ENCODE measurements at regions of chr11 and their contacts with region 1.

Region 1: GRCh38 chr11:85854557-85855340 is 434 bp upstream of the CCDC83 start:
- DNase-seq: peak; percentile 76 to 96 (median 89)
- ATAC-seq: peak; percentile 97
- H3K4me3 ChIP-seq: peak overlapping the region; percentile 70
- H3K4me3 Mint-ChIP-seq: peak overlapping the region; percentile 91
- H3K27ac ChIP-seq: peak overlapping the region; percentile 68 to 75
- H3K27ac Mint-ChIP-seq: peak overlapping the region; percentile 93
- H3K4me1 ChIP-seq: peaks cover 12% of the 10 kb centered on the region
- H3K4me1 Mint-ChIP-seq: peaks cover 13% of the 10 kb centered on the region
- H3K27me3 ChIP-seq: no peaks in the 10 kb centered on the region
- H3K27me3 Mint-ChIP-seq: no peaks in the 10 kb centered on the region
- CTCF ChIP-seq: peak; percentile 87

Region 2: DNA sequence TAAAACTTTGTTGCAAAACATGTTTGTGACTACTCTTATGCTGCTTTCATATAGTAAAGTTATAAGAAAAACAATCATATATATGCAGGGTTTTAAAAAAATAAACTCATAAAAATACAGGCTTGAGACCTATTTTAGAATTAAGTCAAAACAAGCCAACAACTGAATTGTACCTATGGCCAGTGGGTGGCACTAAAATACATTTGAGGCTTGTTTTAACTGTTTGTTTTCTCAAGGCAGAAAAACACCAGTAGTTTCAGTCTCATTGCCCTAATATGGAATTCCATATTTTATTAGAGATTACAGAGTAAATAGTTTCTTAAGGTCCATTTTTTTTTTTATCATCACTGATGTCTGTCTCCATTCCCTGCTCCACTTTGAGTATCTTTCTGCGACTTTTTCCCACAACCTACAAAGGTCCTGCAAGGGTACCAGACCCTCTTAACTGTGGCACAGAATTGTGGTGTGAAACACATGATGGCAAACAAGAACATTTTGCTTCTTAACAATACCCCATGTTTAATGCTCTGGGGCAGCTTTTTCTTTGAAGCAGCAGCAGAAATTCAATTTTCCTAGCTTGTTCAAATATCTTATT is 160.3 kb before region 1 on chr11:
- CTCF ChIA-PET with region 1: interaction called, 12 read pairs
- POLR2A ChIA-PET with region 1: interaction called, 4 read pairs
- intact Hi-C with region 1: loop called (anchors 1 to 2 kb)
- DNase-seq: peak in 7 of 14 experiments; percentile 6 to 71 (median 45)
- ATAC-seq: peak; percentile 69
- H3K4me3 ChIP-seq: no peak overlapping the region
- H3K4me3 Mint-ChIP-seq: no peak overlapping the region
- H3K27ac ChIP-seq: no peak overlapping the region
- H3K27ac Mint-ChIP-seq: no peak overlapping the region
- H3K4me1 ChIP-seq: peaks cover 2% of the 10 kb centered on the region
- H3K4me1 Mint-ChIP-seq: peaks cover 12% of the 10 kb centered on the region
- H3K27me3 ChIP-seq: no peaks in the 10 kb centered on the region
- H3K27me3 Mint-ChIP-seq: no peaks in the 10 kb centered on the region
- CTCF ChIP-seq: peak; percentile 82

Region 3: DNA sequence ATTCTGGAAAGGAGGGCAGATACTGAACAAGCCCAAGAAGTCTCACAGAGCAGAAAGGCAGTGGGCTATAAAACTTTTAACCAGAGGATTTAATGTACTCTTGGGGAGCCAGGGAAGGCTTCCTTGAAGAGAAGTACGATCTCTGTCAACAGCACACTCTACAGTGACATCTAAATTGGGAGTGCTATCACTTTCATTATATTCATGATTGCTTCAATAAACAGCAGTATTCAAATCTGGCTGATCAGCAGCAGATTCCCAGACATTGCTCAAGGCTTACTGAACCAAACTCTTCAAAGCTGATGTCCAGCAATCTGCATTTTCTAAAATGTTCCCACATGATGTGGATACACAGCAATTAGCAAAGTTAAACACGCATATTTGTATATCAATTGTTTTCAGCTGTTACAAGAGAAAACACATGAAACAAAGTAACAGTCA is 88.0 kb before region 1 on chr11:
- CTCF ChIA-PET with region 1: no interaction called
- POLR2A ChIA-PET with region 1: no interaction called
- intact Hi-C with region 1: no loop called
- DNase-seq: no peak
- ATAC-seq: no peak
- H3K4me3 ChIP-seq: no peak overlapping the region
- H3K4me3 Mint-ChIP-seq: no peak overlapping the region
- H3K27ac ChIP-seq: no peak overlapping the region
- H3K27ac Mint-ChIP-seq: no peak overlapping the region
- H3K4me1 ChIP-seq: no peaks in the 10 kb centered on the region
- H3K4me1 Mint-ChIP-seq: peaks cover 43% of the 10 kb centered on the region
- H3K27me3 ChIP-seq: no peaks in the 10 kb centered on the region
- H3K27me3 Mint-ChIP-seq: no peaks in the 10 kb centered on the region
- CTCF ChIP-seq: no peak

Region 4: DNA sequence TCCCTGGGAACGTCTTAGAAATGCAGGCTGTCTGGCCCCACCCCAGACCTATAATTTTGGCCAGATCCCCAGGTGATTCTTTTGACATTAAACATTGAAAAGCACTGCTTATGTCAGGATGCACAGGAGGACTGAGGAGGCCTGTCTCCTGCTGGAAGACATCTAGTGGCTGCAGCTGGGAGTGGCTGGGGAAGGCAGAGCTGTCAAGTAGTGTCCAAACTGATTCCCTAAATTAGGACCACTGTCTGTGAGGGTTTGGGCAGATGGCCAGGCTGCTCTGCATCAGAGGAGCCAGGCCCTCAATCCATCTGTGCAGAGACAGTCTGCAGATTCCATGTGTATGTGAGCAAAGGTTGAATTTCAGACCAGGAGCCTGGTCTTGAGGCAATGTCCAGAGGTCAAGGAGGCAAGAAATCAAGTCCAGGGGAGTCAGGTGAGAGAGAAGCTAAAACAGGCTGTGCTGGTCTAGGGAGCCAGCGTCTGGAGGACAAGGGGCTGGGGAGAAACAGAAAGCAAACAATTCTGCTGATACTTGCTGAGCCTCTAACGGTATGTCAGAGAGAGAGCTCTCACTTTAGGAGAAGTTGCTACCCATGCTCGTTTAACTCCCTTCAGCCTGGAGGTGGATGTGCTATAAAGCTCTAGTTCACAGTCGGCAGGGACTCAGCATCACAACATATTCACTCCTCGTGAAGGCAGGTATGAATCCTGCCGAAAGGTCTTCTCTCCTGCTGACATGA is 28.5 kb before region 1 on chr11:
- CTCF ChIA-PET with region 1: interaction called, 15 read pairs
- POLR2A ChIA-PET with region 1: interaction called, 23 read pairs
- intact Hi-C with region 1: loop called in 1 of 2 experiments (anchors 2 kb)
- DNase-seq: peak in 4 of 14 experiments; percentile 26 to 53 (median 48)
- ATAC-seq: no peak
- H3K4me3 ChIP-seq: no peak overlapping the region
- H3K4me3 Mint-ChIP-seq: peak overlapping the region; percentile 22
- H3K27ac ChIP-seq: peak overlapping the region in 1 of 2 donors; percentile 49
- H3K27ac Mint-ChIP-seq: peak overlapping the region; percentile 86
- H3K4me1 ChIP-seq: peaks cover 59% of the 10 kb centered on the region
- H3K4me1 Mint-ChIP-seq: peaks cover 65% of the 10 kb centered on the region
- H3K27me3 ChIP-seq: no peaks in the 10 kb centered on the region
- H3K27me3 Mint-ChIP-seq: no peaks in the 10 kb centered on the region
- CTCF ChIP-seq: peak; percentile 33

Region 5: GRCh38 chr11:85893395-85893794 is 38.6 kb after region 1 on chr11:
- CTCF ChIA-PET with region 1: no interaction called
- POLR2A ChIA-PET with region 1: no interaction called
- intact Hi-C with region 1: no loop called
- DNase-seq: no peak
- ATAC-seq: no peak
- H3K4me3 ChIP-seq: no peak overlapping the region
- H3K4me3 Mint-ChIP-seq: no peak overlapping the region
- H3K27ac ChIP-seq: no peak overlapping the region
- H3K27ac Mint-ChIP-seq: no peak overlapping the region
- H3K4me1 ChIP-seq: no peaks in the 10 kb centered on the region
- H3K4me1 Mint-ChIP-seq: no peaks in the 10 kb centered on the region
- H3K27me3 ChIP-seq: no peaks in the 10 kb centered on the region
- H3K27me3 Mint-ChIP-seq: no peaks in the 10 kb centered on the region
- CTCF ChIP-seq: no peak

Region 6: GRCh38 chr11:86041975-86042378 is 187.2 kb after region 1 on chr11:
- CTCF ChIA-PET with region 1: interaction called, 7 read pairs
- POLR2A ChIA-PET with region 1: no interaction called
- intact Hi-C with region 1: loop called in 1 of 2 experiments (anchors 10 kb)
- DNase-seq: peak in 9 of 14 experiments; percentile 11 to 88 (median 34)
- ATAC-seq: peak; percentile 98
- H3K4me3 ChIP-seq: no peak overlapping the region
- H3K4me3 Mint-ChIP-seq: no peak overlapping the region
- H3K27ac ChIP-seq: no peak overlapping the region
- H3K27ac Mint-ChIP-seq: peak overlapping the region; percentile 27
- H3K4me1 ChIP-seq: peaks cover 16% of the 10 kb centered on the region
- H3K4me1 Mint-ChIP-seq: peaks cover 62% of the 10 kb centered on the region
- H3K27me3 ChIP-seq: no peaks in the 10 kb centered on the region
- H3K27me3 Mint-ChIP-seq: no peaks in the 10 kb centered on the region
- CTCF ChIP-seq: peak; percentile 93

Region 7: DNA sequence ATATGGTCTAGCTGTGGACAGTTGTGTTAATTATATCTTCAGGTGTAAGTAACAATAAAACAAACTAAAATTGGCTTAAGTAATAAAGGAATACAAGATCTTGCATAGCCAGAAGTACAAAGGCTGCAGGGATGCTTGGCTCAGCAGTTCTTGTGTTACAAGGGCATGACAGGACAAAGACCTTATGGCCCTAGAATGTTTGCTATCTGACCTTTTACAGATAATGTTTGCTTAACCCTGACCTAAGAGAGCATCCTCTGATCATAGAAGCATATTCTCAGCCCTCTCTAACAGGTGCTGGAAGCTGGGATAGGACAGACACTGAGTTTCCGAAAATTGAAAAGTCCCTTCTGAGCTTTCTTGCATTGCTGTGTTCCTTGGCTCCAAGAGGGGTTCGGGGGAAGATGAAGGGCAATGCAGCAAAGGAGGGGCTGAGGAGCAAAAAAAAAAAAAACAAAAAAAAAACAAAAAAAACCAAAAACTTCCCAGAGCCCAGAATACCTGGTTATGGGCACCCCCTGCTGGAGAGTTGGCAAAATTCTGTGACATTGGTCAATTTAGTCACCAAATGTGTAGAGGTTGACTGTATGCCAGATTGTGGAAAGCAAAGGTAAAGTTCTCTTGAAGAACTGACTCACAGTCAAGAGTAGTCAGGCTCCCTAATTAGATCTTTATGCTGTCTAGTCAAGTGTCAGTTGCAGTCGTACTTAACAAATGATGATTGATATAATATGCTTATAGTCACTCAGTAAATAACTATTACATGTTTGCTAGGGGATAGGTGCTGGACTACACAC is 436.9 kb after region 1 on chr11:
- CTCF ChIA-PET with region 1: interaction called, 6 read pairs
- POLR2A ChIA-PET with region 1: no interaction called
- intact Hi-C with region 1: loop called (anchors 1 kb)
- DNase-seq: peak; percentile 41 to 80 (median 54)
- ATAC-seq: peak; percentile 64
- H3K4me3 ChIP-seq: no peak overlapping the region
- H3K4me3 Mint-ChIP-seq: no peak overlapping the region
- H3K27ac ChIP-seq: no peak overlapping the region
- H3K27ac Mint-ChIP-seq: no peak overlapping the region
- H3K4me1 ChIP-seq: peaks cover 32% of the 10 kb centered on the region
- H3K4me1 Mint-ChIP-seq: peaks cover 29% of the 10 kb centered on the region
- H3K27me3 ChIP-seq: no peaks in the 10 kb centered on the region
- H3K27me3 Mint-ChIP-seq: no peaks in the 10 kb centered on the region
- CTCF ChIP-seq: peak; percentile 62

Measured in CD4-positive, alpha-beta T cell (primary cell).